ENCODE measurements at regions of chr1 and their contacts with region 1.

Region 1: GRCh38 chr1:168342572-168343280 is 62.0 kb downstream of the TBX19 start:
- DNase-seq: peak; percentile 76 to 93 (median 83)
- ATAC-seq: peak; percentile 98
- H3K4me3 ChIP-seq: no peak overlapping the region
- H3K27ac ChIP-seq: no peak overlapping the region
- H3K4me1 ChIP-seq: peaks cover 3 to 20% of the 10 kb centered on the region in 2 experiments; a peak in 4 of 5 replicates
- H3K27me3 ChIP-seq: no peaks in the 10 kb centered on the region
- CTCF ChIP-seq: peak; percentile 91 to 95 (median 92)
- EP300 ChIP-seq: no peak
- POLR2A ChIP-seq: no peak
- RAD21 ChIP-seq: peak; percentile 96

Region 2: GRCh38 chr1:168161459-168161858 is 181.3 kb before region 1 on chr1:
- CTCF ChIA-PET with region 1: no interaction called
- POLR2A ChIA-PET with region 1: no interaction called
- in situ Hi-C with region 1: no loop called
- intact Hi-C with region 1: loop called (anchors 2 kb)
- DNase-seq: peak in 3 of 4 experiments; percentile 34 to 95 (median 76)
- ATAC-seq: peak; percentile 98
- H3K4me3 ChIP-seq: no peak overlapping the region
- H3K27ac ChIP-seq: no peak overlapping the region; the same call in 2 of the 3 replicates
- H3K4me1 ChIP-seq: peaks cover 9% of the 10 kb centered on the region in 2 experiments; a peak in 4 of 5 replicates
- H3K27me3 ChIP-seq: no peaks in the 10 kb centered on the region
- CTCF ChIP-seq: peak; percentile 39 to 68 (median 53); a peak in 5 of 6 replicates
- EP300 ChIP-seq: peak; percentile 80
- POLR2A ChIP-seq: no peak
- RAD21 ChIP-seq: peak in 1 of 2 experiments; percentile 64; a peak in 2 of 4 replicates

Region 3: DNA sequence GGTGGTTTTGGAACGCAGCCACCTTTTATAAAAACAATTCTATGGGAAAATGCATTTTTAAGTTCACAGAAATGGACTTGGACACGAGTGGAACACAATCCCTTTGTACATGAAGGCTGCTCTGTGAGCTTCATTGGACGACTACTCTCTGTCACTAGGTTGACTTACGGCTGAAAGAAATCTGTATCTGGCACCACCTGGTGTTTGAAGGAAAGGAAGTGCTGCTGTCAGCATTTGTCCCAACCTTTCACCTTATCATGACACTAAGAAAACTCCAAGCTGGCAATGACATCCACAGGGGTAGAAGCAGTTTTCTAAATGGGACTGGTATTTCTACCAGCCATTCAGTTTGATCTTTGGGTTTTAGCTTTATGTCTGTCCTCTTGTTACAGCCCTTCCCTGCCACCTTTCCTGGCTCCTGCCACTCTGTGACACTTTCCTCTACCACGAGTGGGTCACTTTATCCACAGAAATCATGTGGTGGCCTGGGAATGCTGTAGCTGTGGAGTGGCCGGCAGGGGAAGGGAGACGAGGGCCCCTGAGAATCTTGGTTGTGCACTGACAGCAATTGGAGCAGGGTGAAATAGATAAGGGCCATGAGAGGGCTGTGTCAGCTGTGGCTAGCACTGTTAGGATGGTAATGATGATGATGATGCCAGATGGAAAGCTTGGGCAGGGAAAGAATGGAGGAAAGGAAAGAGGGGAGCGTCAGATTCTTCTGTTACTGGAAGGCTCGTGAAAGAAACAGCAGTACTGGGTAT is 23.2 kb after region 1 on chr1:
- CTCF ChIA-PET with region 1: interaction called, 9 read pairs
- POLR2A ChIA-PET with region 1: interaction called, 6 read pairs
- in situ Hi-C with region 1: no loop called
- intact Hi-C with region 1: loop called (anchors 1 kb)
- DNase-seq: peak; percentile 57 to 77 (median 68)
- ATAC-seq: peak; percentile 92
- H3K4me3 ChIP-seq: no peak overlapping the region
- H3K27ac ChIP-seq: no peak overlapping the region
- H3K4me1 ChIP-seq: peaks cover 4 to 19% of the 10 kb centered on the region in 2 experiments; a peak in 3 of 5 replicates
- H3K27me3 ChIP-seq: peaks cover 0 to 2% of the 10 kb centered on the region in 2 experiments; a peak in 2 of 5 replicates
- CTCF ChIP-seq: peak; percentile 62 to 71 (median 69)
- EP300 ChIP-seq: no peak; the same call in 1 of the 2 replicates
- POLR2A ChIP-seq: no peak
- RAD21 ChIP-seq: peak; percentile 52 to 75

Region 4: DNA sequence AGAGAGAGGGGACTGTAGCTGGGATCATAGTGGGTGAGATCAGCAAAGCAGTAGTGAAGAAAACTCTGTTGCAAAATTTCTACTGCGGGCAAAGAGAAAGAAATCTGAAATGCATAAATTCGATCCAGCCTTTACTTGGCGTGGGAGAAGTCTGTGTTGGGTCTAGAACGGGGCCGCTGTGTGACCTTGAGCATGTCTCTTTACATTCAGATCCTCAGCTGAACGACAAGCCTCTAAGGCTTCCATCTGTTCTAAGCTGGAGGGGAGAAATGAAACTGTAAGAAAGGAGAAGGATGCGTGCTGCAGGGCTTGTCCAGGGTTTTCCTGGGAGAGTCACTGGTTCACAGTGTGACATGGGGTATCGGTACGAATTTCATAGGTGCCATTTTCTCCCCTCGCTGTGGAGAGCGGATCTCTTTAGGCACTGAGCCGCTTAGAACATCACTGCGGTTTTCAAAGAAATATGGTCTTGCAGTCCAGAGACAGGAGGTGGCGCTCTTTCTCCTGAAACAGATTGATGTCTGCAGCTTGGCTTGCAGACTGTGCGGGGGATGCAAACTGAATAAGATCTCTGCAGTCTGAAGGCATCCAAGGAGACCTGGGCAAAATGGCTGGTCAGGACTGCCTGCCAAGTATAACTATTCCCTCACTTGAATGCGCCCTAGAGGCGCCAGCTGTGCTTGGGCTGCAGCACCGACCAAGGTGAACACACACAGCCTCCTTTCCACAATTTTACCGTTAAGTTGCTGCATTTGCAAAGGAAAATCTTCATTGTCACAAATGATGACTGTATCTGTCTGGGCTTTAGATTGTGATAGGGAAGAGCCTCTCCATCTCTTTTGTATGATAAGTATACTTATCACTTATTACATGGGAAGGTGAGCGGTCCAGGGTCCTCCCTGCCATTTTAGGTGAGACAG is 97.0 kb after region 1 on chr1:
- CTCF ChIA-PET with region 1: interaction called, 9 read pairs
- POLR2A ChIA-PET with region 1: no interaction called
- in situ Hi-C with region 1: no loop called
- intact Hi-C with region 1: loop called (anchors 2 kb)
- DNase-seq: peak; percentile 61 to 90 (median 69)
- ATAC-seq: peak; percentile 97
- H3K4me3 ChIP-seq: no peak overlapping the region
- H3K27ac ChIP-seq: no peak overlapping the region
- H3K4me1 ChIP-seq: no peaks in the 10 kb centered on the region; a peak in 1 of 5 replicates
- H3K27me3 ChIP-seq: peaks cover 1 to 32% of the 10 kb centered on the region in 2 experiments; a peak in 3 of 5 replicates
- CTCF ChIP-seq: peak; percentile 90 to 96 (median 94)
- EP300 ChIP-seq: no peak
- POLR2A ChIP-seq: no peak
- RAD21 ChIP-seq: peak; percentile 94 to 99

Region 5: GRCh38 chr1:168845140-168845539 is 502.4 kb after region 1 on chr1:
- CTCF ChIA-PET with region 1: no interaction called
- POLR2A ChIA-PET with region 1: no interaction called
- in situ Hi-C with region 1: no loop called
- intact Hi-C with region 1: loop called (anchors 10 kb)
- DNase-seq: peak in 2 of 4 experiments; percentile 41 to 58
- ATAC-seq: peak; percentile 32; the same call in 1 of the 3 replicates
- H3K4me3 ChIP-seq: no peak overlapping the region
- H3K27ac ChIP-seq: no peak overlapping the region
- H3K4me1 ChIP-seq: no peaks in the 10 kb centered on the region; a peak in 1 of 5 replicates
- H3K27me3 ChIP-seq: no peaks in the 10 kb centered on the region; a peak in 2 of 5 replicates
- CTCF ChIP-seq: no peak
- EP300 ChIP-seq: peak; percentile 41; the same call in 1 of the 2 replicates
- POLR2A ChIP-seq: no peak
- RAD21 ChIP-seq: no peak

Measured in K562 (cell line).